ENCODE measurements at regions of chrX and their contacts with region 1.

Region 1: DNA sequence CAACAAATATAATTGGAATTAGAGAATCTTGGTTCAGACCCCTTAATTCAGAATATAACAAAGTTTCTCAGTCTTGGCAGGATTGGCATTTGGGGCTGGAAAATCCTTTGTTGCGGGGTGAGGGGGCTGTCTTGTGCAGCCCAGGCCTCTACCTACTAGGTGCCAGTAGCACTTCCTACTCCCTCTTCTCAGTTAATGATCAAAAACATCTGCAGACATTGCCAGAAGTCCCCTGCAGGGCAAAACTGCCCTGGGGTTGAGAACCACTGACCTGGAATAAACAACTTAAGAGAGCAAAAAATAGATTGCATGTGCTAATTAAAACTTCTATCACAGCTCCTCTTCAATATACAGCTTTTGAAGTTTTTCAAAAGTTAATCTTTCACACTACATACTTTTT is 36.7 kb upstream of the CXorf38 start:
- DNase-seq: no peak
- ATAC-seq: no peak
- H3K4me3 ChIP-seq: no peak overlapping the region
- H3K4me3 Mint-ChIP-seq: no peak overlapping the region
- H3K27ac ChIP-seq: no peak overlapping the region
- H3K27ac Mint-ChIP-seq: peak overlapping the region in 1 of 2 donors; percentile 31
- H3K4me1 ChIP-seq: no peaks in the 10 kb centered on the region
- H3K4me1 Mint-ChIP-seq: peaks cover 12 to 24% (median 23%) of the 10 kb centered on the region in 3 donors
- H3K27me3 ChIP-seq: no peaks in the 10 kb centered on the region
- H3K27me3 Mint-ChIP-seq: no peaks in the 10 kb centered on the region

Region 2: GRCh38 chrX:40013266-40014195 is 670.6 kb before region 1 on chrX:
- CTCF ChIA-PET with region 1: no interaction called
- POLR2A ChIA-PET with region 1: no interaction called
- DNase-seq: peak in 6 of 35 experiments; percentile 16 to 52 (median 24)
- ATAC-seq: peak; percentile 32 to 41 (median 36)
- H3K4me3 ChIP-seq: peak overlapping the region; percentile 58 to 65
- H3K4me3 Mint-ChIP-seq: peak overlapping the region; percentile 66 to 73 (median 71)
- H3K27ac ChIP-seq: no peak overlapping the region
- H3K27ac Mint-ChIP-seq: no peak overlapping the region
- H3K4me1 ChIP-seq: peaks cover 10 to 60% of the 10 kb centered on the region in 2 experiments
- H3K4me1 Mint-ChIP-seq: peaks cover 25 to 29% (median 26%) of the 10 kb centered on the region in 3 donors
- H3K27me3 ChIP-seq: peaks cover 3 to 38% of the 10 kb centered on the region in 2 experiments
- H3K27me3 Mint-ChIP-seq: peaks cover 15 to 21% of the 10 kb centered on the region in 2 donors

Region 3: DNA sequence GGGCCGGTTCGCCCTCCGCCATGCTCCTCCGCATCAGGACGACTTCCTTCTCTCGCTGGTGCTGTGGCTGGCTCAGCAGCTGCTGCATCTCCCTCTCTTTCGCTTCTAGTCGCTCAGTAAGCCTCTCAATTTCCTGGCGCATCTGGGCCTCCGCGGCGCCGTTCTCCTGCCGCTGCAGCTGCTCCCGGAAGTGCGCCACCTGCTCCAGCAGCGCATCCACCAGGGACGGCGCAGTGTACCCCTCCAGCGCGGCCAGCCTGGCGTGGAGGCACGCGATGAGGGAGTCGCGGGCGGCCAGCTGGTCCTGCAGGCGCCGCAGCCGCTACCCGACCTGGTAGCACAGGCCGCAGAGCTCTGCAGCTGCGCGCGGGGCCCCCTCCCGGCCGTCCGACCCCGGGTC is 148.6 kb after region 1 on chrX:
- CTCF ChIA-PET with region 1: no interaction called
- POLR2A ChIA-PET with region 1: interaction called in 1 of 2 experiments, 11 read pairs
- DNase-seq: no peak
- ATAC-seq: no peak
- H3K4me3 ChIP-seq: no peak overlapping the region
- H3K4me3 Mint-ChIP-seq: peak overlapping the region in 1 of 3 donors; percentile 24
- H3K27ac ChIP-seq: no peak overlapping the region
- H3K27ac Mint-ChIP-seq: no peak overlapping the region
- H3K4me1 ChIP-seq: no peaks in the 10 kb centered on the region
- H3K4me1 Mint-ChIP-seq: no peaks in the 10 kb centered on the region
- H3K27me3 ChIP-seq: no peaks in the 10 kb centered on the region
- H3K27me3 Mint-ChIP-seq: peaks cover 0 to 24% of the 10 kb centered on the region in 2 donors

Region 4: DNA sequence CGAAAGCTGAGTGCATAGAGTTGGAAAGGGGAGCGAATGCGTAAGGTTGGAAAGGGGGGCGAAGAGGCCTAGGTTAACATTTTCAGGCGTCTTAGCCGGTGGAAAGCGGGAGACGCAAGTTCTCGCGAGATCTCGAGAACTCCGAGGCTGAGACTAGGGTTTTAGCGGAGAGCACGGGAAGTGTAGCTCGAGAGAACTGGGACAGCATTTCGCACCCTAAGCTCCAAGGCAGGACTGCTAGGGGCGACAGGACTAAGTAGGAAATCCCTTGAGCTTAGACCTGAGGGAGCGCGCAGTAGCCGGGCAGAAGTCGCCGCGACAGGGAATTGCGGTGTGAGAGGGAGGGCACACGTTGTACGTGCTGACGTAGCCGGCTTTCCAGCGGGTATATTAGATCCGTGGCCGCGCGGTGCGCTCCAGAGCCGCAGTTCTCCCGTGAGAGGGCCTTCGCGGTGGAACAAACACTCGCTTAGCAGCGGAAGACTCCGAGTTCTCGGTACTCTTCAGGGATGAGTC is 649.7 kb after region 1 on chrX and contains the start of gene DDX3X:
- CTCF ChIA-PET with region 1: no interaction called
- POLR2A ChIA-PET with region 1: no interaction called
- DNase-seq: peak; percentile 63 to 90 (median 79)
- ATAC-seq: peak; percentile 63 to 68 (median 64)
- H3K4me3 ChIP-seq: peak within 1 kb of the TSS; percentile 99 to 100
- H3K4me3 Mint-ChIP-seq: peak within 1 kb of the TSS; percentile 94 to 97 (median 96)
- H3K27ac ChIP-seq: peak within 1 kb of the TSS; percentile 100
- H3K27ac Mint-ChIP-seq: peak within 1 kb of the TSS; percentile 100
- H3K4me1 ChIP-seq: peaks cover 24 to 40% of the 10 kb centered on the region in 2 experiments
- H3K4me1 Mint-ChIP-seq: peaks cover 33 to 90% (median 53%) of the 10 kb centered on the region in 3 donors
- H3K27me3 ChIP-seq: no peaks in the 10 kb centered on the region
- H3K27me3 Mint-ChIP-seq: no peaks in the 10 kb centered on the region
- total RNA-seq, gene DDX3X: 253 to 1,077 (median 367) TPM